Activated B cell treated with CpG ODN at 0.5 μM for 24 hours (primary cell): ENCODE measurements at regions of chr1 and their contacts with region 1.

Region 1: GRCh38 chr1:46724991-46725735 is 6.2 kb upstream of the EFCAB14 start:
- DNase-seq: peak; percentile 28
- ATAC-seq: peak; percentile 95
- H3K4me3 Mint-ChIP-seq: no peak overlapping the region
- H3K27ac Mint-ChIP-seq: no peak overlapping the region
- H3K4me1 Mint-ChIP-seq: no peaks in the 10 kb centered on the region
- H3K27me3 Mint-ChIP-seq: peaks cover 33% of the 10 kb centered on the region
- CTCF ChIP-seq: no peak

Region 2: GRCh38 chr1:46406881-46407608 is 318.1 kb before region 1 on chr1:
- CTCF ChIA-PET with region 1: no interaction called
- POLR2A ChIA-PET with region 1: no interaction called
- intact Hi-C with region 1: loop called (anchors 1 kb)
- DNase-seq: no peak
- ATAC-seq: no peak
- H3K4me3 Mint-ChIP-seq: no peak overlapping the region
- H3K27ac Mint-ChIP-seq: no peak overlapping the region
- H3K4me1 Mint-ChIP-seq: no peaks in the 10 kb centered on the region
- H3K27me3 Mint-ChIP-seq: no peaks in the 10 kb centered on the region
- CTCF ChIP-seq: no peak

Region 3: DNA sequence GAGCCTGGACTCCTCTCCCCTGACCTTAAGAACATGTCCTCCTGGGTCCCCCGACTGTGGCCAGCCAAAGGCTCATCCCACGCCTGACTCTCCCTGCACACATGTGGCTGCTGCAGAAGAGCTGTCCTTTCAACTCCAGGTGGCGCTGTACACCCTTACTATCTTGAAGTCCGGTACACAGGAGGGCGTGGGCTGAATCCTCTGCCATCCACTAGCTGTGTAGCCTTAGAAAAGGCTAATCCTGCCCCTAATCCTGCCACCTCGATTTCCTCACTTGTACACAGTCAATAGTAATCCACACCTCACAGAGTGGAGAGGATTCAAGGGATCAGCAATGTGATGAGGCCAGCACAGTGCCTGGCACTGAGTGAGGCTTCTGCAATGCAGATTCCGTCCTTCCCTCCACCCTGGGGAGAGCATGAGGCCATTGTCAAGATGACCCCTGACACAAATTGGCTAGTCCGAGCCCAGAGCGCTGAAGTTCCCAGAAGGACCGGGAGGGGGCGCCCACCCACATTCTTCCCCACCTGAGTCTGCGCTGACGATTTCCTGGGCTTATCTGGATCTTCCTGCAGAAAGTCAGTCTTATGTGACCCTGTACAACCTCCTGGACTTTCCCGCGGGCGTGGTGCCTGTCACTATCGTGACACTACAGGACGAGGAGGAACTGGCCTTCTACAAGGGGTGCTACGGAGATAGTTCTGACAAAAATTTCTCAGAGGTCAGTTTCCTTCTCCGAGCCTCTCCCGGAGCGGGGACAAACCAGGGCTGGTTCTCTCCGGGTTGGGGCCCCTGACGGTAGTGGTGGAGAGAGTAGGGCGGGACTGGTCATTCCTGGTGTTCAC is 282.6 kb before region 1 on chr1:
- CTCF ChIA-PET with region 1: interaction called, 11 read pairs
- POLR2A ChIA-PET with region 1: no interaction called
- intact Hi-C with region 1: loop called (anchors 1 kb)
- DNase-seq: peak; percentile 63
- ATAC-seq: peak; percentile 78
- H3K4me3 Mint-ChIP-seq: peak overlapping the region; percentile 81
- H3K27ac Mint-ChIP-seq: no peak overlapping the region
- H3K4me1 Mint-ChIP-seq: peaks cover 10% of the 10 kb centered on the region
- H3K27me3 Mint-ChIP-seq: peaks cover 35% of the 10 kb centered on the region
- CTCF ChIP-seq: peak; percentile 96

Region 4: DNA sequence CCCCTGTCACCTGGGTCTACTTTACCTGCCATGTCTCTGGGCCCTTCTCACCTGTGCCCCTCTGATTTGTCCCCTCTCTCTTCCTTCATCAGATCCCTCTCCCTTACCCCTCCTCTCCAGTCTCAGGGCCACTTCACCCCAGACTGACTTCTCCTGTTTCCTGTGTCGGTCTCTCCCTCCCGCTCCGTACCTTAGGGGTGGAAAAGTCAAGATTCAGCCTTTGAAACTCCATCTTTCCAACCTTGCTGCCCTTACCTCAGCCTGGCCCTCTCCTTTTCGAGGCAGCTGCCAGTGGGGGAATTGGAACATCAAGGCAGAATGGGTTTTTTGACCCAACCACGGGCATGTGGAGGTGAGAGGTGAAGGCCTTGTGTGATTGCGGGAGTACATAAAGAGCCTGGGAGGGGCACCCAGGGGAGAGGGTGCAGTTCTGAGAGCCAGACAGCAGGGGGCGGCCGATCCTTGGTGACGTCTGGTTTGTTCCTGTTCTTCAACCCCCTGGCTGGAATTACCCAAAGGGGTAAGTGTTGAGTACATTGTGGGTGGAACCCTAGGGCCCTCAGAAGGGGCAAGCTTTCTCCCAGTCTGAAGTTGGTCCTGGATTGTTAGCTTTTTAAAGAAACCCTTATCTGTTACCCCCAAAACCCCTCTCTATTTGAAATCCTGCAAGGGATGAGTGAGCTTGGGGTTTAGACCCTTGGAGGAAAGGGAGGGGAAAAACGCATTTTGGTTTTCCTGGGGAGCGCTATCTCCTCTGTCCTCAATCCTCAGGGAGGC is 247.8 kb before region 1 on chr1:
- CTCF ChIA-PET with region 1: no interaction called
- POLR2A ChIA-PET with region 1: no interaction called
- intact Hi-C with region 1: loop called (anchors 1 kb)
- DNase-seq: peak; percentile 67
- ATAC-seq: peak; percentile 96
- H3K4me3 Mint-ChIP-seq: no peak overlapping the region
- H3K27ac Mint-ChIP-seq: no peak overlapping the region
- H3K4me1 Mint-ChIP-seq: peaks cover 40% of the 10 kb centered on the region
- H3K27me3 Mint-ChIP-seq: peaks cover 18% of the 10 kb centered on the region
- CTCF ChIP-seq: peak; percentile 71

Region 5: DNA sequence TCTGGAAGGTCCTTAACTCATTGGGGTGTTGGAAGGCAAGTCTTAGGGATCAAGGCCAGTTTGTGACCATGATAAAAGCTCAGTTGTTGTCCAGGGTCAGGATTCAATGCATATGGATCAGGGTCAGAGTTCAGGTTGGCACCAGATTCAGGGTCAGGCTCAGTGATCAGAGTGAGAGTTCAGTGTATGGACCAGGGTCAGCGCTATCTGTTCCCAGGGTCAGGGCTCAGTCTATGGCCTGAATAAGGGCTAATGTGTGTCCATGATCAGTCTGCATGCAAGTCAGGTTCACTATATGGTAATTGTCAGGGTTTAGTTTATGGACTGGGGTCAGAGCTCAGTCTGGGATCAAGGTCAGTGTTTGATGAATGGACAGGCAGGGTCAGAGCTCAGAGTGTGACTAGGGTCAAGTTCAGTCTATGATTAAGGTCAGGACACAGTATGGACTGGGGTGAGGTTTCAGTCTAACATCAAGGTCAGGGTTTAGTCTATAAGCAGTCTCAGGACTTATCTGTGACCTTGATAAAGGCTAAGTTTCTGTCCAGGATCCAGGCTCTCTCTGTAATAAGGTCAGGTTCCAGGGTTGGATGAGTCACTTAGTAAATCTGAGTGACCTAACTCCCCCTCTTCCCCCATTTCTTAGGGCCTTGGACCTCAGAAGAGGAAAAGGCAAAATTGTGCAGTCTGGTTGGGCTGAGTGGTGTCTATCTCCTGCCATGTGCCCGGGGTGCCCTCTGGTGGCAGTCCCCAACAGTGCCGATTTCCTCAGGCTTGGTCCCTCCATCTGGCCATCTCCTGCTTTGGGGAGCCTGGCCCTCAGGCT is 197.5 kb before region 1 on chr1:
- CTCF ChIA-PET with region 1: interaction called, 6 read pairs
- POLR2A ChIA-PET with region 1: no interaction called
- intact Hi-C with region 1: loop called (anchors 1 kb)
- DNase-seq: peak; percentile 51
- ATAC-seq: peak; percentile 76
- H3K4me3 Mint-ChIP-seq: no peak overlapping the region
- H3K27ac Mint-ChIP-seq: no peak overlapping the region
- H3K4me1 Mint-ChIP-seq: peaks cover 1% of the 10 kb centered on the region
- H3K27me3 Mint-ChIP-seq: peaks cover 61% of the 10 kb centered on the region
- CTCF ChIP-seq: no peak

Region 6: GRCh38 chr1:46603858-46604549 is 121.2 kb before region 1 on chr1 and contains the start of gene MKNK1:
- CTCF ChIA-PET with region 1: interaction called, 11 read pairs
- POLR2A ChIA-PET with region 1: interaction called, 3 read pairs
- intact Hi-C with region 1: no loop called
- DNase-seq: peak; percentile 97
- ATAC-seq: peak; percentile 99
- H3K4me3 Mint-ChIP-seq: peak within 1 kb of the TSS; percentile 95
- H3K27ac Mint-ChIP-seq: peak within 1 kb of the TSS; percentile 86
- H3K4me1 Mint-ChIP-seq: peaks cover 17% of the 10 kb centered on the region
- H3K27me3 Mint-ChIP-seq: no peaks in the 10 kb centered on the region
- CTCF ChIP-seq: no peak
- total RNA-seq, gene MKNK1: 42.3 and 45.0 TPM in 2 replicates

Region 7: DNA sequence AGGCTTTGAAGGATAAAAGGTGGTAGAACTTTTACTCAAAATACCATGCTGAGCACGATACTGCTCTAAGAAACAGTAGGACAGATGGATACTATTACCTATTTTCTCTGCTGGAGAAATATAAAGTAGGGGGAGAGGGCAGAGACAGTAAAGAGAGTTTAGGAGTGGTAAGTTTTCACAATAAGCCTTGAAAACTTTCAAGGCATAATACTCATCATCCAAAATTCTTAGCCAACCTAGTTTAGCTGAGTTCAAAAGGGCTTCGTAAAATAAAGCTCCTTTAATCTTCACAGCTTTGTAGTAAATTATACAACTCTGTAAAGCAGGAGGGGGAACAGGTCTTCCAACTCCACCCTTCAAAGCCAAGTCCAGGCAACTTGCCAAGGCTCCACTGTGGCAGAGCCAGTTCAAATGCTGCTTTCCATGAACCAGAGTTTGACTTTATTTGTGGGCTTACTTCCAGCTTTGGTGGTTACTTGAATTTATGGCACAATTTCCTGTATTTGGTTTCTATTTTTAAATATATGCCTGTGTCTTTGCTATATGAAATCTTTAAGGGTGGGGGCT is 38.0 kb before region 1 on chr1:
- CTCF ChIA-PET with region 1: no interaction called
- POLR2A ChIA-PET with region 1: no interaction called
- intact Hi-C with region 1: no loop called
- DNase-seq: no peak
- ATAC-seq: no peak
- H3K4me3 Mint-ChIP-seq: no peak overlapping the region
- H3K27ac Mint-ChIP-seq: no peak overlapping the region
- H3K4me1 Mint-ChIP-seq: no peaks in the 10 kb centered on the region
- H3K27me3 Mint-ChIP-seq: no peaks in the 10 kb centered on the region
- CTCF ChIP-seq: no peak

Region 8: DNA sequence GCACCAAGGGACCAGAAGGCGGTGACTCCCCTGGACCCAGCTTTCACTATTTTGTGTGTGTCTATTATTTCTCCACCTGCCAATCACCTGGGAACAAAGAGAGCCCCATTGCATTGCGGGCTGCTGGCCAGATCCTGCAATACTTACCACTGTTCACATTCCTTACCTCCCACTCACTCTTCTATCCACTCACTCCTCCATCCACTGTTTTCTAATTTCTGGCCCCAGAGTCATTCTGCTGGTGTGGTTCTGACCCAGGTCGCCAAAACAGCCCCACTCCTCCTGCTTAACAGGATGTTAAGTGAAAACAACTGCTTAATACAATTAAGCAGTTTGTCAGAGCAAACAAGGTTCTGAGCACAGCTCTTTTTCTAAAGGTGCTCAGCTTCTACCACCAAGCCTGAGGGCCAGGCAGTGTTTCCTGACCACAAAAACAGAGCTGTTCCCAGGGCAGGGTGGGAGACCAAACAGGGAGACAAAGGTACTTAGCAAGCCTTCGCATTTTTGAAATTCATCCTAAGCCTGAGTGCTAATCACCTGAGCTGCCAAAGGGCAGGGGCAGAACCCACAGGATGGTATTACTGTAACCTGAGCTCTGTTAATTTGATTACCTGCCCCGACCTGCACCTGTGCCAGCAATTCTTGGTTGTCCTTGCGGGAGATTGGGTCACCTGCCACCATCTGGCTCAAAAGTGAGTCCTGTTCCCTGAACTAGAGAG is 32.2 kb after region 1 on chr1:
- CTCF ChIA-PET with region 1: no interaction called
- POLR2A ChIA-PET with region 1: no interaction called
- intact Hi-C with region 1: no loop called
- DNase-seq: no peak
- ATAC-seq: no peak
- H3K4me3 Mint-ChIP-seq: no peak overlapping the region
- H3K27ac Mint-ChIP-seq: no peak overlapping the region
- H3K4me1 Mint-ChIP-seq: no peaks in the 10 kb centered on the region
- H3K27me3 Mint-ChIP-seq: peaks cover 24% of the 10 kb centered on the region
- CTCF ChIP-seq: no peak